PC-9 (cell line): ENCODE measurements at regions of chr12 and their contacts with region 1.

Region 1: GRCh38 chr12:31749024-31749704 is 20.3 kb upstream of the AMN1 start:
- DNase-seq: peak; percentile 83 to 98
- H3K4me3 ChIP-seq: peak overlapping the region; percentile 5; the same call in 1 of the 2 replicates
- H3K27ac ChIP-seq: peak overlapping the region; percentile 89
- H3K4me1 ChIP-seq: peaks cover 29% of the 10 kb centered on the region
- H3K27me3 ChIP-seq: no peaks in the 10 kb centered on the region
- CTCF ChIP-seq: no peak

Region 2: DNA sequence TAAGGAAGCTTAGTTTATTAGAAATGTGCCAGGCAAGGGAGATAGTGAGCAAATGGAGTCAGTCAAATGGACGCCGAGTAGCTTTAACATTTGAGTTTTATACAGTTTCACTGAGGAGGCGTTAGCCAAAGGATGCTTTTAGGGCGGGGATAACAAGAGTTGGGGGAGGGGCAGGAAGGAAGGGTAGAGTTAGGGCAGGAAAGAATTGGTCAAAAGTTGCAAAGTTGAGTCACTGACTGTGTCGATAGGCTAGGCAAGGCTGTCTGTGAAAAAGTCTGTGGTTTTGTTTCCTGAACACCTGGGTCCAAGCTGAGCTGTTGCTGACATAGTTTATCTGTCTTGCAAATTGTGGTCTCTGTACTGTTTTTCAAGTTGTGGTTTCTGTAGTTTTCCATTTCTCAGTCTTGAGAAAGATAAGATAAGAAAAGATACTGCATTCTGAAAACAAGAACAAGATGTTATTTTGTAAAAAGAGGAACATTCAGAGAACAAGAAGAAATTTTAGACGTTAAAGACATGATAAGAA is 147.4 kb after region 1 on chr12:
- CTCF ChIA-PET with region 1: interaction called, 10 read pairs
- POLR2A ChIA-PET with region 1: no interaction called
- intact Hi-C with region 1: no loop called
- DNase-seq: no peak
- H3K4me3 ChIP-seq: no peak overlapping the region
- H3K27ac ChIP-seq: no peak overlapping the region
- H3K4me1 ChIP-seq: no peaks in the 10 kb centered on the region; the same call in 1 of the 2 replicates
- H3K27me3 ChIP-seq: no peaks in the 10 kb centered on the region
- CTCF ChIP-seq: no peak